Endothelial cell of umbilical vein (primary cell): ENCODE measurements at regions of chr14 and their contacts with region 1.

Region 1: DNA sequence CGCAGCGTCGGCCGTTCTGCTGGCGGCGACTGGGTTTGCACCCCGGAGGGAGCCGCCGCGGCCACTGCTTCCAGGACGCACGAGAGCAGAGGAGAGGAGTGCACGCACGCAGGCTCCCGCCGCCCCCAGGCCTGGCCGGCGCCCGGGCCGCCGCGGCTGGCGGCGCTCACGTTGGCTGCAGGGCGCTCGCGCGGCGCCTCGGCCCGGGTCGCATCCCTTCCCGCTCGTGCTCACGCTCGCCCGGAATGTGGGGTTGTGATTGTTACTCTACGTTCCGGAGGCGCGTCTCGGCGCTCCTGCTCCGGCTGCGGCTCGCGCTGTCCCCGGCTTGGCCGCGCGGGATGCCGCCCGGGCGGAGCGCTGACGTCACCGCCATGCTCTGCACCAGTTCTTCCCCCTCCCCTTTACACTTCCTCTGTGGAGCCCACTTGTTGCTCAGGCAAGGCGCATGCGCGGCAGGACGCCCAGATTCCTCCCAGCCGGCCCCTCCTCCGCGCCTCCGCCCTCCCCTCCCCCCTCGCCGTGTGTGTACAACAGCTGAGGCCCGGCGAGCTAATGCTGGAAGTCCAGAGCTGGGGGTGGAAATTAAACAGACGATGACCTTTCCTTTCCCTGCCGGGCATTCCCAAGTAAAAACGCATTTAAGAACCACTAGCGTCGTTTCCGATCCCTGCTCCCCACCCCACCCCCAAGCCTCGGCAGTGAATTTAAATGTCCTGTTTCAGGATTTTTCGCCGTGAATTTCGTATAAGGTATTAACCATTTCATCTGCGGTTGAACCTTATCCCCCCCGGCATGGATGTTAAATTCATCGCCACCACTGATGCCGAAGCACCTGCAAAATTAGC is at the start of gene IRF2BPL:
- DNase-seq: peak; percentile 99
- H3K4me3 ChIP-seq: peak within 1 kb of the TSS; percentile 24 to 90 (median 54)
- H3K27ac ChIP-seq: peak within 1 kb of the TSS; percentile 93
- H3K4me1 ChIP-seq: peaks cover 48% of the 10 kb centered on the region
- H3K27me3 ChIP-seq: no peaks in the 10 kb centered on the region
- CTCF ChIP-seq: no peak
- POLR2A ChIP-seq: peak; percentile 96
- total RNA-seq, gene IRF2BPL: 23.1 and 23.3 TPM in 2 replicates

Region 2: DNA sequence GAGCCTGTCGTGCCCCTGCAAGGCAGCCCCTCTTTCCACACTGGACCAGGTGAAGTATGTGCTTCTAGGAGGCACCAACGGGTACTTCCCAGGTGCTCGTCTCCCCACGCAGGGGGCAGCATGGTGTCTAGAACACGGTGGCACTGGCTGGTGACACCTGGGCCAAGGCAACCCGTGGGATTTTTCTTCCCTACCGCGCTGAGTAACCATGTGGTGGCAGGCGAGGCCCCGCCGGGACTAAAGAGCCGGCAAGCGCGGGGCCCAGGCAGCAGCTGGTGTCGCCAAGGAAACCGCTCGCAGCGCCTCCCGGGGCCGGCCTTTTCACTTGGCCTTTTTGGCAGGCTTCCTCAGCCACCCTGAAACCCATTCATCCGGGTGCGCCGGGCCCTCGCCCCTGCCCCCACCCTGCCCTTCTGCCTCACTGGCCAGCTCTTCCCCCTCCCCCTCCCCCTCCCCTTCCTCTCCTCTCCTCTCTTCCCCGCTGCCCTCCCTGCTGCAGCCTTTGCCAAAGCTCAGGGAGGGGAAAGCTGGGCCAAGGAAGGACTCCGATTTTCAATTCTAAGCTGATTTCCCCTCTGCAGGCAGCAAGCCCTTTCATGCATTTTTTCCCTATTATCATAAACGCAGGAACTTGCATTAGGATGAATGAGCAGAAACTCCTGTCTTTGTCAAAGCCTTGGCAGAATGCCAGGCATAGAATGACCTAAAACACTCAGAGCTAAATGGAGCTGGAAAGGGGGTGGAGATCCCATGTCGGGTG is 81.3 kb before region 1 on chr14:
- CTCF ChIA-PET with region 1: interaction called, 16 read pairs
- POLR2A ChIA-PET with region 1: interaction called, 3 read pairs
- dilution Hi-C with region 1: no loop called
- intact Hi-C with region 1: loop called (anchors 1 kb)
- DNase-seq: peak; percentile 83
- H3K4me3 ChIP-seq: no peak overlapping the region
- H3K27ac ChIP-seq: peak overlapping the region; percentile 72
- H3K4me1 ChIP-seq: peaks cover 40% of the 10 kb centered on the region
- H3K27me3 ChIP-seq: no peaks in the 10 kb centered on the region
- CTCF ChIP-seq: peak; percentile 28 to 54
- POLR2A ChIP-seq: no peak

Region 3: DNA sequence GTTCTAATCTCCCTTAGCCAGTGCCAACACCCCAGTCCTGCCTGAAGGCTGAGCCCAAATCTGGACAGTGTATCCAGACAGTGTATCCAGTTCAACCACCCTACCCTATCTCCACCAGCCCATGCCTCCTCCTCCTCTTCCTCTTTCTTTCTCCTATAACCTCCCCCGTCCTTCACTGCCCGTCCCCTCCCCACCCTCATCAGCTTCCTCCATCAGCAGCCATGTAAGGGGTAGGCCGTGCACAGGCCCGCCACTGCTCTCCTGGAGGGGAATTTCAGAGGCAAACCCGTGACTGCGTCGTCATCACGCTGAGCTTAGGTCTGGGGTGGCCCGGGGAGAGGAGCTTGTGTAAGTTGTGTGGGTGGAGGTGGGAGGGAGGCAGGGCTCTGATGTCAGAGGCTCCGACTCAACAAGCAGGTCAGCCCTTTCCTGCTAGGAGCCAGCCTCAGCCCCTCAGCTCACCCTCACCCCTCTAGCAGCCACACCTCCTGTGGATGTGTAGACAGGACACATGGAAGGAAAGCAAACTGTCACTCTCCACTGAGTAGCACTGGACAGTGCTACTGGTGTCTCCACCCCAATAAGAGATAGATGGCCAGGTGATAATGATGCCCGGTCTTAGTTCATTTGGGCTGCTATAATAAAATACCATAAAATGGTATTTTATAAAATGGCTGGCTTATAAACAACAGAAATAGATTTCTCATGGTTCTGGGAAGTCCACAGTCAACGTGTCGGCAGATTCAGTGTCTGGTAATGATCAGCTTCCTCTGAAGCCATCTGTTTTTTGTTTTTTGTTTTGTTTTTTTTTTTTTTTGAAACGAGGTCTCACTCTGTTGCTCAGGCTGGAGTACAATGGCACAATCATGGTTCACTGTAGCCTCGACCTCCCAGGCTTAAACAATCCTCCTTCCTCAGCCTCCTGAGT is 50.6 kb before region 1 on chr14:
- CTCF ChIA-PET with region 1: no interaction called
- POLR2A ChIA-PET with region 1: no interaction called
- dilution Hi-C with region 1: no loop called
- intact Hi-C with region 1: no loop called
- DNase-seq: no peak
- H3K4me3 ChIP-seq: no peak overlapping the region
- H3K27ac ChIP-seq: no peak overlapping the region
- H3K4me1 ChIP-seq: no peaks in the 10 kb centered on the region
- H3K27me3 ChIP-seq: no peaks in the 10 kb centered on the region
- CTCF ChIP-seq: no peak
- POLR2A ChIP-seq: no peak

Region 4: GRCh38 chr14:77040059-77040740 is 11.6 kb after region 1 on chr14:
- CTCF ChIA-PET with region 1: interaction called, 58 read pairs
- POLR2A ChIA-PET with region 1: interaction called, 9 read pairs
- dilution Hi-C with region 1: no loop called
- intact Hi-C with region 1: loop called (anchors 1 kb)
- DNase-seq: peak; percentile 99
- H3K4me3 ChIP-seq: peak overlapping the region in 1 of 3 experiments; percentile 29
- H3K27ac ChIP-seq: peak overlapping the region; percentile 93
- H3K4me1 ChIP-seq: peaks cover 68% of the 10 kb centered on the region
- H3K27me3 ChIP-seq: no peaks in the 10 kb centered on the region
- CTCF ChIP-seq: no peak
- POLR2A ChIP-seq: no peak

Region 5: GRCh38 chr14:77059276-77059915 is 30.8 kb after region 1 on chr14:
- CTCF ChIA-PET with region 1: interaction called, 46 read pairs
- POLR2A ChIA-PET with region 1: no interaction called
- dilution Hi-C with region 1: no loop called
- intact Hi-C with region 1: loop called (anchors 1 kb)
- DNase-seq: peak; percentile 94
- H3K4me3 ChIP-seq: no peak overlapping the region
- H3K27ac ChIP-seq: peak overlapping the region; percentile 41
- H3K4me1 ChIP-seq: peaks cover 23% of the 10 kb centered on the region
- H3K27me3 ChIP-seq: no peaks in the 10 kb centered on the region
- CTCF ChIP-seq: peak; percentile 38 to 57
- POLR2A ChIP-seq: no peak

Region 6: DNA sequence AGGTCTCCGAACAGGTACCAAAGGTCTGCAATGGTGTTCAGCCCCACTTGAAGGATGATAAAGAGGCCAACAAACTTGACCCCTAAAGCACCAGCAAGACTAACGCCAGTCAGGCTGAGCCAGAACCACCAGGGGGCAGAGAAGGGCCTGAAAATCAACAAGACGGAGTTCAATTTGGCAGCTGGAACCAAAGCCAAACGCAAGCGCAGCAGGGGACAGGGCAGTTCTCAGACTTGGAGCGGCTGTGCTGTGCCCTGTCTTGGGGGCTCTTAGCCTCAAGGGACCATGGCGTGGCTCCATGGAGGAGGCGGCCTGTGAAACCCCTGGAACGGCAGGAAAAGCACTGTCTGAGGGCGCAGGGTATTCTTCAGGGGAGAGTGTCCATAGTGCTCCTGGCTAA is 272.5 kb after region 1 on chr14:
- CTCF ChIA-PET with region 1: no interaction called
- POLR2A ChIA-PET with region 1: no interaction called
- dilution Hi-C with region 1: no loop called
- intact Hi-C with region 1: no loop called
- DNase-seq: peak; percentile 74
- H3K4me3 ChIP-seq: no peak overlapping the region
- H3K27ac ChIP-seq: no peak overlapping the region
- H3K4me1 ChIP-seq: peaks cover 29% of the 10 kb centered on the region
- H3K27me3 ChIP-seq: no peaks in the 10 kb centered on the region
- CTCF ChIP-seq: peak; percentile 85
- POLR2A ChIP-seq: no peak